ENCODE measurements at regions of chr1 and their contacts with region 1.

Region 1: GRCh38 chr1:157963713-157964112 is 29.7 kb upstream of the KIRREL1 start:
- DNase-seq: no peak
- H3K4me3 ChIP-seq: no peak overlapping the region
- CTCF ChIP-seq: peak; percentile 75

Region 2: DNA sequence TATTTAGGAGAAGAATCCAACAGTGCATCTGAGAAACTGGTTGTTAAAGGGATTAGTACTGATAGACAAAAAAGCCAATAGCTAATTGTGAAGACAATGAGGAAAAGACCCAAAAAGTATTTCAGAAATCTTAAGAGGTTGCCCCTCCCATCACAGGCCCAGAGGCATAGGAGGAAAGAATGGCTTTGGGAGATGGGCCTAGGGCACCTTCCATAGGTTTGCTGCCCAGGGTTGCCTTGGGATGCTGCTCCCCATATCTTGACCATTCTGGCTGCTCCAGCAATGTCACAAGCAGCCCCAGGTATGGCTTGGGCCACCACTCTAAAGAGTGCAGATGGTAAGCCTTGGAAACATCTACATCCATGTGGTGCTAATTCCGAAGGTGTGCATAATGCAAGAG is 53.4 kb before region 1 on chr1:
- CTCF ChIA-PET with region 1: no interaction called
- POLR2A ChIA-PET with region 1: no interaction called
- DNase-seq: no peak
- H3K4me3 ChIP-seq: no peak overlapping the region
- CTCF ChIP-seq: no peak

Region 3: DNA sequence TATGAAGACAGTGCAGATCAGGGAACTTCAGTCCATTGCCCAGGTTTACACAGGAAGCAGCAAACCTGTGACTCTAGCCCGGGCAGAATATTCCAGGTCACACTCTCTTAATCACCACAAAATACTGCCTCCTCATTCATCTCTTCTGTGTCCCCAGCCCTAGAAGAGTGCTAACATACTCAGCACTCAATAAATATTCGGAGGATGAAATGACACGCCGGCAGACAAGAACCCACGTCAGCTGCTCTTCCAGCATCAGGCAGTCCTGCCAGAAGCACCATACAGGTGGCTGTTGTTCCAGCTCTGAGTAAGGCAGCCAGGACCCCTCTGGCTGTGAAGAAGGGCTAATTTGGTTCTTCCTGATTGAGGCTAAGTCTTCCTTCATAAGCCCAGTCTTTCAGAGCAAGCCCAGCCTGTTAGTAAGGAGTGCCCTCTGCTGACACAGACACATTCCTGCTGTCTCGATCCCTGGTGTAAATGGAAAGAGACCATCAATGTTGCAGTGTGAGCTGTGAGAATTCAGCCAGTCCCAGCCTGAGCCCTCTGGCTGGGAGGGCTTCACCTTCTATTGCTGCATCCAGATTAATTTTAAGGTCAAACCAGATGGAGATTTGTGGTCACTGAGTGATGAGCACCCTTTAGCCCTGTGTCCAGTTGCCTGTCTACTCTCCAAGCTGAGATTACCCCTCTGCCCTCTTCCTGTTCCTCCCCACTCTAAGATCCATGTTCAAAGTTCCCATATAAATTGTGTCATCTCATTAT is 15.2 kb before region 1 on chr1:
- CTCF ChIA-PET with region 1: interaction called, 19 read pairs
- POLR2A ChIA-PET with region 1: no interaction called
- DNase-seq: no peak
- H3K4me3 ChIP-seq: no peak overlapping the region
- CTCF ChIP-seq: peak; percentile 55

Region 4: GRCh38 chr1:157984469-157984868 is 20.8 kb after region 1 on chr1:
- CTCF ChIA-PET with region 1: interaction called, 401 read pairs
- POLR2A ChIA-PET with region 1: no interaction called
- DNase-seq: no peak
- H3K4me3 ChIP-seq: no peak overlapping the region
- CTCF ChIP-seq: no peak

Region 5: GRCh38 chr1:158095737-158096335 is 132.1 kb after region 1 on chr1:
- CTCF ChIA-PET with region 1: interaction called, 140 read pairs
- POLR2A ChIA-PET with region 1: no interaction called
- DNase-seq: no peak
- H3K4me3 ChIP-seq: no peak overlapping the region
- CTCF ChIP-seq: peak; percentile 80

Region 6: GRCh38 chr1:158124999-158125398 is 161.3 kb after region 1 on chr1:
- CTCF ChIA-PET with region 1: interaction called, 2,279 read pairs
- POLR2A ChIA-PET with region 1: interaction called, 12 read pairs
- DNase-seq: peak; percentile 71
- H3K4me3 ChIP-seq: no peak overlapping the region
- CTCF ChIP-seq: peak; percentile 87

Region 7: GRCh38 chr1:158527190-158527815 is 563.6 kb after region 1 on chr1:
- CTCF ChIA-PET with region 1: interaction called, 11 read pairs
- POLR2A ChIA-PET with region 1: no interaction called
- DNase-seq: no peak
- H3K4me3 ChIP-seq: no peak overlapping the region
- CTCF ChIP-seq: peak; percentile 43

Measured in AG04449 (cell line).